Dendritic cell treated with granulocyte-macrophage colony-stimulating factor and Interleukin-4, amounts not matched to agents 40 ng/mL and 50 ng/mL, for 4 days (primary cell): ENCODE measurements at regions of chr11 and their contacts with region 1.

Region 1: GRCh38 chr11:94623120-94623735 is 56.1 kb downstream of the PIWIL4 start:
- H3K4me3 Mint-ChIP-seq: no peak overlapping the region
- H3K27ac Mint-ChIP-seq: no peak overlapping the region
- H3K4me1 Mint-ChIP-seq: no peaks in the 10 kb centered on the region
- H3K27me3 Mint-ChIP-seq: no peaks in the 10 kb centered on the region

Region 2: GRCh38 chr11:94449437-94449836 is 173.8 kb before region 1 on chr11:
- intact Hi-C with region 1: no loop called
- H3K4me3 Mint-ChIP-seq: no peak overlapping the region
- H3K27ac Mint-ChIP-seq: no peak overlapping the region
- H3K4me1 Mint-ChIP-seq: no peaks in the 10 kb centered on the region
- H3K27me3 Mint-ChIP-seq: no peaks in the 10 kb centered on the region

Region 3: DNA sequence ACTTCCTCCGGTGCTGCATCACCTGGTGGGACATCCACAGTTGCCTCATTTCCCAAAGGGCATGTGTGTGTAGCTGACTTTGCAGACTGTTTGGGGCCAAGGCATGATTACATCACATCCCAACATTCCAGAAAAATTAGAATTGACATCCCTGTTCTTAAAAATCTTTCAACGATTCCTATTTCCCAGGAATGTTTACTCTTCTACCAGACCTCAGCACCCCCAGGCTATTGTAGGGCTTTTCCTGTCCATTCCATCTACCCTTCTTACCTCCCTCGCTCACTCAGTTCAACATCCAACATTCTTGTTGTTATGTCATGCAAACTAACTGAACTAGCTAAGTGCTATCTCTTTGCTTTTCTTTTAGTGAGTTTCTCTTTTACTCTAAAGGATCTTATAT is 18.7 kb before region 1 on chr11:
- intact Hi-C with region 1: no loop called
- H3K4me3 Mint-ChIP-seq: no peak overlapping the region
- H3K27ac Mint-ChIP-seq: no peak overlapping the region
- H3K4me1 Mint-ChIP-seq: peaks cover 9% of the 10 kb centered on the region
- H3K27me3 Mint-ChIP-seq: no peaks in the 10 kb centered on the region

Region 4: DNA sequence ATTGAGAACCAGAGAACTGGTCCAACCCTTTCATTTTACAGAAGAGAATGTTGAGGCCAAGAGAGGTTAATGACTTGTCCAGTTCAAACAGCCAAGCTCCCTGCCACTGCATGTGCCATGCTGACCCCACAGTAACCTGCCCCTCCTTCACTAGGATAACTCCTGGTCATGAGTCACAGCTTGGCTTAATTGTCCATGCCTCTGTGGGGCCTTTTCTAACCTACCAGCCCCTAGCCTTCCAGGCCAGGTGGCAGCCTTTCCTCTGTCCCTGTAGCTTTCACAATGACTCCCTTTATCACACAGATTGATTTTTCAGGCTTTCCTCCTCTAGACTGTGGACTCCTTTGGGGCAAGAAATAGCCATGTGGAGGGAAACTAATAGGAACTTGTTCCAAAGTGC is 41.1 kb after region 1 on chr11:
- intact Hi-C with region 1: no loop called
- H3K4me3 Mint-ChIP-seq: no peak overlapping the region
- H3K27ac Mint-ChIP-seq: no peak overlapping the region
- H3K4me1 Mint-ChIP-seq: no peaks in the 10 kb centered on the region
- H3K27me3 Mint-ChIP-seq: no peaks in the 10 kb centered on the region

Region 5: GRCh38 chr11:94678236-94678635 is 55.0 kb after region 1 on chr11:
- intact Hi-C with region 1: no loop called
- H3K4me3 Mint-ChIP-seq: no peak overlapping the region
- H3K27ac Mint-ChIP-seq: no peak overlapping the region
- H3K4me1 Mint-ChIP-seq: no peaks in the 10 kb centered on the region
- H3K27me3 Mint-ChIP-seq: no peaks in the 10 kb centered on the region

Region 6: DNA sequence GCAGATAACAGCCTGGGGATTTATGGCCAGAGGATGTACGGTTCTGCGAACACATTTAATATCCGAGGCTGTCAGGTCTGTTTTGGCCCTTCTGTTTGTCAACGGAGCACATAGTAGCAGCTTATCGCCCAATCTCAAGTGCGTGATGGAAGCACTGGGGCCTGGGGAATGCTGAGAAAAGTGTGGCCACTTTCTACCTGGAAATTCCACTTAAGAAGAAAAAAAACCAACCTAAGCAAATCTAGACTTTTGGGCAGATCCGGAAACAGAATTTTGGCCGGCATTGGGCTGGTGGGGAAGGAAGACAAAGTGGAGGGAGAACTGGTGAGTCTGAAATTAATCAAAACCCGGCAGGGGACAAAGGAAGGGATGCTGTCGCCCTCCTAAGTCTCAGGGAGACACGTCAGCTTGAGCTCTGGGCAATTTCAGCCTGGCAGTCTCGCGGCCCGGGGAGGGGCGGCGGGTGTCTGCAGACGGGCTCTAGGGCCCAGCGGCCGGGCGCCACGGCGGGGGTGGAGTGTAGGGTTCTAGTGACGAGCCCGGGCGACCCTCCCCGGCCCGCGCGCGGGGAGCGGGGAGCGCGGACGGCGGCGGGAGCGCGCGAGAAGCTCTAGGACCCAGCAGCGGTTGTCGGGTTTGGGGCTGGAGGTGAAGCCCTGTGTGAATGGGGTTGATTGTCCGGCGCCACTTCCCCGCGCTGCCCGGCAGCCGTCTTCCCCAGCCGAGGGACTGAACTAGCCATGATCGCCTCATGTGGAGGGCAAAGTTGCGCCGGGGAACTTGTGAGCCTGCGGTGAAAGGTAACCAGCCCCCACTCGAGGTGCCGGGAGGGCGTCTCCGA is 144.8 kb after region 1 on chr11 and contains the start of gene AMOTL1:
- intact Hi-C with region 1: loop called (anchors 5 kb)
- H3K4me3 Mint-ChIP-seq: peak within 1 kb of the TSS; percentile 79
- H3K27ac Mint-ChIP-seq: peak within 1 kb of the TSS; percentile 64
- H3K4me1 Mint-ChIP-seq: peaks cover 13% of the 10 kb centered on the region
- H3K27me3 Mint-ChIP-seq: peaks cover 28% of the 10 kb centered on the region

Region 7: GRCh38 chr11:94897330-94897768 is 274.1 kb after region 1 on chr11:
- intact Hi-C with region 1: loop called (anchors 1 kb)
- H3K4me3 Mint-ChIP-seq: no peak overlapping the region
- H3K27ac Mint-ChIP-seq: no peak overlapping the region
- H3K4me1 Mint-ChIP-seq: peaks cover 6% of the 10 kb centered on the region
- H3K27me3 Mint-ChIP-seq: no peaks in the 10 kb centered on the region

Region 8: GRCh38 chr11:94973099-94973968 is 350.1 kb after region 1 on chr11 and contains the starts of genes CWC15 and KDM4D:
- intact Hi-C with region 1: loop called (anchors 5 kb)
- H3K4me3 Mint-ChIP-seq: peak within 1 kb of the TSS; percentile 97
- H3K27ac Mint-ChIP-seq: peak within 1 kb of the TSS; percentile 97
- H3K4me1 Mint-ChIP-seq: peaks cover 12% of the 10 kb centered on the region
- H3K27me3 Mint-ChIP-seq: peaks cover 7% of the 10 kb centered on the region

Region 9: GRCh38 chr11:95067039-95067840 is 444.0 kb after region 1 on chr11:
- intact Hi-C with region 1: loop called (anchors 5 kb)
- H3K4me3 Mint-ChIP-seq: peak overlapping the region; percentile 86
- H3K27ac Mint-ChIP-seq: peak overlapping the region; percentile 95
- H3K4me1 Mint-ChIP-seq: peaks cover 10% of the 10 kb centered on the region
- H3K27me3 Mint-ChIP-seq: peaks cover 2% of the 10 kb centered on the region

Region 10: GRCh38 chr11:95150946-95151684 is 527.9 kb after region 1 on chr11:
- intact Hi-C with region 1: loop called (anchors 5 kb)
- H3K4me3 Mint-ChIP-seq: peak overlapping the region; percentile 86
- H3K27ac Mint-ChIP-seq: peak overlapping the region; percentile 86
- H3K4me1 Mint-ChIP-seq: peaks cover 52% of the 10 kb centered on the region
- H3K27me3 Mint-ChIP-seq: peaks cover 21% of the 10 kb centered on the region

Region 11: DNA sequence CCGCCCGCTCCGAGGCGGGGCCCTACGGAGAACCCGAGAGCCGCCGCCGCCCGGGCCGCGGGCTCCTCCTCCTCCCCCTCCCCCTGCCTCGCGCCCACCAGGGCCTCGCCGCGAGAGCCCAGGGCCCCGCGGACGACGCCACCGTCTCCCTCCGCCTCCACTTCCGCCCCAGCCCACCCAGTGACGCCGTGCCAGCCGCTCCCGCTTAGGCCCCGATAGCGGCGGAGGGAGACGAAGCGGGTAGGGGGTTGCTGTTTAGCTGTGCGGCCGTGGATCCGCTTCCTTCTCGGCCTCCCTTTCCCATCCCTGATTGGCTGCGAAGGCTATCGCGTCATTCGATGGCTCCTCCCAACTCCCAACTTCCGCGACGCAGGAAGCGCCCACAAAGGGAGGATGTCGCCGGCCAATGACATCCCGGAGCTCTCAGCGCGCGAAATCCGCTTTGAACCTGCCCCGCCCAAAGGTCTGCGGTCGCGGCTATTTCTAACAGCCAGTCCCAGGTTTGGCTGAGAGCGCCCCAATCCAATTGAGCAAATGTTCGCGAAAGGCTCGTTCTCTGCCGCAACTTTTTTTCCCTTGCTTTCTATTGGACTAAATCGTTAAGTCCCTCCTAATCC is 1166.4 kb after region 1 on chr11 and contains the start of gene FAM76B:
- intact Hi-C with region 1: loop called (anchors 10 kb)
- H3K4me3 Mint-ChIP-seq: peak within 1 kb of the TSS; percentile 99
- H3K27ac Mint-ChIP-seq: peak within 1 kb of the TSS; percentile 100
- H3K4me1 Mint-ChIP-seq: peaks cover 31% of the 10 kb centered on the region
- H3K27me3 Mint-ChIP-seq: no peaks in the 10 kb centered on the region